Activated CD8-positive, alpha-beta T cell treated with anti-CD3 and anti-CD28 coated beads for 36 hours (primary cell): ENCODE measurements at regions of chr9 and their contacts with region 1.

Region 1: GRCh38 chr9:114348906-114349482 is 19.3 kb downstream of the ORM2 start:
- DNase-seq: peak; percentile 99
- ATAC-seq: peak; percentile 89
- H3K4me3 Mint-ChIP-seq: peak overlapping the region; percentile 66
- H3K27ac Mint-ChIP-seq: peak overlapping the region; percentile 100
- H3K4me1 Mint-ChIP-seq: peaks cover 66% of the 10 kb centered on the region
- H3K27me3 Mint-ChIP-seq: no peaks in the 10 kb centered on the region
- CTCF ChIP-seq: no peak

Region 2: GRCh38 chr9:114366334-114367128 is 17.5 kb after region 1 on chr9:
- CTCF ChIA-PET with region 1: interaction called, 6 read pairs
- POLR2A ChIA-PET with region 1: interaction called, 30 read pairs
- intact Hi-C with region 1: no loop called
- DNase-seq: peak; percentile 59
- ATAC-seq: peak; percentile 50
- H3K4me3 Mint-ChIP-seq: peak overlapping the region; percentile 38
- H3K27ac Mint-ChIP-seq: peak overlapping the region; percentile 93
- H3K4me1 Mint-ChIP-seq: peaks cover 86% of the 10 kb centered on the region
- H3K27me3 Mint-ChIP-seq: no peaks in the 10 kb centered on the region
- CTCF ChIP-seq: no peak